ENCODE measurements at regions of chr16 and their contacts with region 1.

Region 1: DNA sequence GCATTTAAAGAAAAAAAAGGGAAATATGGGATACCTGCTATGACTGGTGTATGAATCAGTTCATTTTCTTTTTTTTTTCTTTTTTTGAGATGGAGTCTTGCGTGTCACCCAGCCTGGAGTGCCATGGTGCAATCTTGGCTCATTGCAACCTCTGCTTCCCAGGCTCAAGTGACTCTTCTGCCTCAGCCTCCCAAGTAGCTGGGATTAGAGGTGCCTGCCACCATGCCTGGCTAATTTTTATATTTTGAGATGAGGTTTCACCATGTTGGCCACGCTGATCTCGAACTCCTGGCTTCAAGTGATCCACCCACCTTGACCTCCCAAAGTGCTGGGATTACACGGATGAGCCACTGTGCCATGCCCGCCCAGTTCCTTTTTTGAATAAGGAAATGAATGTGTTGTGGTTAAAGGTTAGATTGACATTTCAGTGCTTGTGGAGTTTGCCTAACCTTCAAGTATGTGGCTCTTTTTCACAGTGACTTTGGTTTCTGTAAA is 7.7 kb downstream of the HAPSTR1 start:
- DNase-seq: peak; percentile 57
- H3K4me3 Mint-ChIP-seq: peak overlapping the region; percentile 20
- H3K27ac Mint-ChIP-seq: peak overlapping the region; percentile 81
- H3K4me1 Mint-ChIP-seq: peaks cover 90% of the 10 kb centered on the region
- H3K27me3 Mint-ChIP-seq: no peaks in the 10 kb centered on the region

Region 2: GRCh38 chr16:9027070-9027795 is 71.9 kb before region 1 on chr16:
- CTCF ChIA-PET with region 1: no interaction called
- POLR2A ChIA-PET with region 1: no interaction called
- intact Hi-C with region 1: no loop called
- DNase-seq: no peak
- H3K4me3 Mint-ChIP-seq: no peak overlapping the region
- H3K27ac Mint-ChIP-seq: no peak overlapping the region
- H3K4me1 Mint-ChIP-seq: no peaks in the 10 kb centered on the region
- H3K27me3 Mint-ChIP-seq: no peaks in the 10 kb centered on the region

Region 3: DNA sequence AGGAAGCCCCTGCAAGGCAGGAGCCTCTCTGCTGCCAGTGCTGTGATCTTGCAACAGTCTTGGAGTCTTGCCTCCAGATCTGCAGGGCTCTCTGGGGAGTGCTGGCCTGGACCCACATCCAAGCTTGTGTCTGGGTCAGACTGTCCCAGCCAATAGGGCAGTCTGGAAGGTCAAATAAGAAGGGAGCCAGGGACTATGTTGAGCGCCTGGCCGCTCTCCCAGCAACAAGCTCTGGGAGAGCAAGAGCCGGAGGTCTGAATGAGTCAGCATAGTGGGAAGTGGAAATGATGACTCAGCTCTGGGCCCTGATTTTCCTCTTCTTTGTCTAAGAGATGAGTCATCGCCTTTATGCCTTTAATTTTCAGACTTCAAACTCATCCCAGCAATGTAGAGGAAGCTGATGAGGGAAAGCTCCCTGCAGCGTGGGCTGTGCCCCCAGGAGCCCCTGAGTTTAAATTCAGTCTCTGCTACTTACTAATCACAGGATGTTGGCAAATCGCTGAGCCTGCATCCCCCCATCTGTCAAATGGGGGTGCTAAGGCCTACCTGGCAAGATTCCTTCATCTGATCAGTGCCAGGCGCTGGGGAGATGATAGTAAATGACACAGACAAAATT is 51.4 kb before region 1 on chr16:
- CTCF ChIA-PET with region 1: no interaction called
- POLR2A ChIA-PET with region 1: no interaction called
- intact Hi-C with region 1: loop called (anchors 1 kb)
- DNase-seq: peak; percentile 81
- H3K4me3 Mint-ChIP-seq: no peak overlapping the region
- H3K27ac Mint-ChIP-seq: peak overlapping the region; percentile 66
- H3K4me1 Mint-ChIP-seq: peaks cover 37% of the 10 kb centered on the region
- H3K27me3 Mint-ChIP-seq: no peaks in the 10 kb centered on the region

Region 4: GRCh38 chr16:9112166-9112843 is 13.1 kb after region 1 on chr16:
- CTCF ChIA-PET with region 1: no interaction called
- POLR2A ChIA-PET with region 1: interaction called, 3 read pairs
- intact Hi-C with region 1: loop called (anchors 2 kb)
- DNase-seq: no peak
- H3K4me3 Mint-ChIP-seq: no peak overlapping the region
- H3K27ac Mint-ChIP-seq: peak overlapping the region; percentile 35
- H3K4me1 Mint-ChIP-seq: peaks cover 93% of the 10 kb centered on the region
- H3K27me3 Mint-ChIP-seq: no peaks in the 10 kb centered on the region

Region 5: DNA sequence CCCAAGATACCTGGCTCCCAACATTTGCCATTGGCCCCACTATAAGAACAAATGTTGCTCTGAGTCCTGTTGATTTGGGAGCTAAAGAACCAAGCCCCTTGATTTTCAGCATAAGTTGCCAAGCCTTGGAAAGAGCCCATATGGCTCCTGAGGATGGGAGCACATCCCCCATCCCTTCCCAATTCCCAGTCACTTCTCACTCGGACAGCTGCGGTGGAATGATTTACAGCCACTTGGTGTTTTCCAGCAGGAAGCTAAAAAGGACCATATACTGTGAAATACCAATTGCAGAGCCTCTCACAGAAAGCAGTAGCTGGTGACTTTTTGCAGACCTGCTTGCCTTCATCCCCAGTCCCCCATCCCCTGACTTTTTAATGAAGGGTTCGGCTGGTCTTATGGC is 558.5 kb after region 1 on chr16:
- CTCF ChIA-PET with region 1: no interaction called
- POLR2A ChIA-PET with region 1: no interaction called
- intact Hi-C with region 1: no loop called
- DNase-seq: no peak
- H3K4me3 Mint-ChIP-seq: no peak overlapping the region
- H3K27ac Mint-ChIP-seq: no peak overlapping the region
- H3K4me1 Mint-ChIP-seq: no peaks in the 10 kb centered on the region
- H3K27me3 Mint-ChIP-seq: no peaks in the 10 kb centered on the region

Measured in activated CD4-positive, alpha-beta memory T cell treated with anti-CD3 and anti-CD28 coated beads for 36 hours (primary cell).